WTC11 (cell line): ENCODE measurements at regions of chr9 and their contacts with region 1.

Region 1: GRCh38 chr9:1939926-1940368 is 75.2 kb upstream of the SMARCA2 start:
- DNase-seq: peak; percentile 43
- ATAC-seq: peak; percentile 97
- H3K4me3 Mint-ChIP-seq: no peak overlapping the region
- H3K27ac Mint-ChIP-seq: no peak overlapping the region
- H3K4me1 Mint-ChIP-seq: 0 out of 2 replicates have a peak, but pooled peaks cover under 1% of the 10 kb centered on the region
- H3K27me3 Mint-ChIP-seq: no peaks in the 10 kb centered on the region
- CTCF ChIP-seq: peak; percentile 48

Region 2: DNA sequence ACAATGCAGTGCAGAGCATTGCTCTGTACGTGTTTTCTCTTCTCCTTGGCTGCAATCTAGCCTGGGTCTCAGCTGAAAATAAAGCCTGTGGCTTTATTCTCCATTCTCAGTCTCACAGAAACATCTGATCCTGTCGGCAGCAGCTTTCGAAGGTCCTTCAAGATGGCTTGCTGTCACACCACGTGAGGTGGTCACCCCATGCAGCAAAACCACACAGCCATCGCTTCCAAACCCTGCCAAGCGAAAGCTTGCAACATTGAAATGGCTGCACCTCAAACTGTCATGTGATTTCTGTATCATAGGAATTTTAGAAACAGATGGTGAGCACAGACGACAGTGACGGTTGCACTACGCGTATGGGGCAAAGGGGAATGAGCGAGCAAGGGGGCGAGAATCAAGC is 23.3 kb before region 1 on chr9:
- CTCF ChIA-PET with region 1: interaction called, 10 read pairs
- POLR2A ChIA-PET with region 1: no interaction called
- DNase-seq: no peak
- ATAC-seq: no peak
- H3K4me3 Mint-ChIP-seq: no peak overlapping the region
- H3K27ac Mint-ChIP-seq: no peak overlapping the region
- H3K4me1 Mint-ChIP-seq: peaks cover 26% of the 10 kb centered on the region
- H3K27me3 Mint-ChIP-seq: no peaks in the 10 kb centered on the region; the same call in 1 of the 2 replicates
- CTCF ChIP-seq: no peak